H1 (cell line): ENCODE measurements at regions of chr6 and their contacts with region 1.

Region 1: DNA sequence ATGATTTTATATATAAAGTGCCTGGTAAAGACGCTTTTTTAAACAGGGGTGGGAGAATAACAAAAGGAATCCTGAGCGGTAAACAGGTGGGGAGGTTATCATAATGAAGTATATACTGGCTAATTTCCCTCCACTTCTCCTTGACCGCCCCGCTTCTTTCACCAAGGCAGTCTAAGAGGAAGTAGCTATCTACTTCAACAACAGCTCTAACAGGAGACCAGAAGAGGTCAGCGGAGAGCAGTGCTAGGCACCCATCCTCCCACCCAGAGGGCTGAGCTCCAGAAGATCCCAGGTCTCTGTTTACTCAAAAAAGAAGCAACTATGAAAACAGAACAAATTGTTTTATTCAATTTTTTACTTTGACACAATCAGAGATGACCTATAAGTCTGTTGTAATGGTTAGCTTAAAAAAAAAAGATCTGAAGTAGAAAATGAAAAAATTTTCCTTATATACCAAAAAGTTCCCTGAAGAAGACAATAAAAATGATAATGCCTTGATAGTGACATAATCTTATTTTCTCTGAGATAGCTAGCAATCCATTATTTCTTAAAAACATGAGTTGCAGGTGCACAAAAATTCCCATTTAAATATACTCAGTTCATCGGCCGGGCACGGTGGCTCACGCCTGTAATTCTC is 141.1 kb downstream of the PDSS2 start:
- DNase-seq: peak; percentile 27 to 51
- H3K4me3 ChIP-seq: no peak overlapping the region
- H3K27ac ChIP-seq: no peak overlapping the region
- H3K4me1 ChIP-seq: no peaks in the 10 kb centered on the region; a peak in 1 of 7 replicates
- H3K27me3 ChIP-seq: no peaks in the 10 kb centered on the region
- CTCF ChIP-seq: peak; percentile 53 to 79 (median 78)
- EP300 ChIP-seq: no peak
- POLR2A ChIP-seq: no peak
- RAD21 ChIP-seq: peak; percentile 91 to 93

Region 2: GRCh38 chr6:107185391-107185970 is 132.7 kb before region 1 on chr6:
- CTCF ChIA-PET with region 1: interaction called, 18 read pairs
- POLR2A ChIA-PET with region 1: no interaction called
- DNase-seq: no peak
- H3K4me3 ChIP-seq: no peak overlapping the region
- H3K27ac ChIP-seq: no peak overlapping the region
- H3K4me1 ChIP-seq: no peaks in the 10 kb centered on the region
- H3K27me3 ChIP-seq: no peaks in the 10 kb centered on the region
- CTCF ChIP-seq: peak; percentile 10 to 57 (median 51)
- EP300 ChIP-seq: no peak
- POLR2A ChIP-seq: no peak
- RAD21 ChIP-seq: peak; percentile 79 to 82

Region 3: GRCh38 chr6:107218142-107218541 is 100.1 kb before region 1 on chr6:
- CTCF ChIA-PET with region 1: no interaction called
- POLR2A ChIA-PET with region 1: no interaction called
- DNase-seq: no peak
- H3K4me3 ChIP-seq: no peak overlapping the region
- H3K27ac ChIP-seq: no peak overlapping the region
- H3K4me1 ChIP-seq: peaks cover 0 to 3% (median 0%) of the 10 kb centered on the region in 4 experiments; a peak in 3 of 7 replicates
- H3K27me3 ChIP-seq: no peaks in the 10 kb centered on the region
- CTCF ChIP-seq: peak in 1 of 3 experiments; percentile 21; a peak in 2 of 4 replicates
- EP300 ChIP-seq: no peak
- POLR2A ChIP-seq: no peak
- RAD21 ChIP-seq: peak; percentile 13 to 30; a peak in 1 of 4 replicates

Region 4: GRCh38 chr6:107228754-107229153 is 89.5 kb before region 1 on chr6:
- CTCF ChIA-PET with region 1: no interaction called
- POLR2A ChIA-PET with region 1: no interaction called
- DNase-seq: no peak
- H3K4me3 ChIP-seq: no peak overlapping the region
- H3K27ac ChIP-seq: no peak overlapping the region
- H3K4me1 ChIP-seq: no peaks in the 10 kb centered on the region; a peak in 1 of 7 replicates
- H3K27me3 ChIP-seq: no peaks in the 10 kb centered on the region
- CTCF ChIP-seq: no peak
- EP300 ChIP-seq: no peak
- POLR2A ChIP-seq: no peak
- RAD21 ChIP-seq: no peak

Region 5: GRCh38 chr6:107266563-107266962 is 51.7 kb before region 1 on chr6:
- CTCF ChIA-PET with region 1: no interaction called
- POLR2A ChIA-PET with region 1: no interaction called
- DNase-seq: no peak
- H3K4me3 ChIP-seq: no peak overlapping the region
- H3K27ac ChIP-seq: no peak overlapping the region
- H3K4me1 ChIP-seq: peaks cover 0 to 3% (median 1%) of the 10 kb centered on the region in 4 experiments; a peak in 2 of 7 replicates
- H3K27me3 ChIP-seq: no peaks in the 10 kb centered on the region
- CTCF ChIP-seq: no peak
- EP300 ChIP-seq: no peak
- POLR2A ChIP-seq: no peak
- RAD21 ChIP-seq: no peak

Region 6: DNA sequence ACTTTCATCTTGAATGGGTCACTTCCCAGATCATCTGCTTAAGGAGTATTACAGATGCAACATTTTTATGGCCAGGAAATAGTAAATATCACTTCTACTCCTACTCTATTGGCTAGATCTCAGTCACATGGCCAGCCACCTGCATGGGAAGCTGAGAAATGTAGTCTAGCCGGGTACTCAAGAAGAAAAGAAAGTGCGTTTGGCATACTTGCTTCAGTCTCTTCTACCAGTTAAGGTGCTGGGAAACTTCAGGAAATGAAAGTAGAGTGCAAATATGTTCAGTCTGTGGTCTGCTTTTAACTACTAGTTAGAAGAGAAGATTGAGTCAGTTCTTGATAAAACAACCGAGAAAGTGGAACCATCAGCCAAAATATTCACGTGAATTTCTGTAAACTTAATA is 11.9 kb after region 1 on chr6:
- CTCF ChIA-PET with region 1: interaction called, 10 read pairs
- POLR2A ChIA-PET with region 1: no interaction called
- DNase-seq: no peak
- H3K4me3 ChIP-seq: no peak overlapping the region
- H3K27ac ChIP-seq: no peak overlapping the region
- H3K4me1 ChIP-seq: no peaks in the 10 kb centered on the region
- H3K27me3 ChIP-seq: no peaks in the 10 kb centered on the region
- CTCF ChIP-seq: no peak
- EP300 ChIP-seq: no peak
- POLR2A ChIP-seq: no peak
- RAD21 ChIP-seq: no peak